Activated naive CD4-positive, alpha-beta T cell treated with anti-CD3 and anti-CD28 coated beads for 36 hours (primary cell): ENCODE measurements at regions of chr6 and their contacts with region 1.

Region 1: DNA sequence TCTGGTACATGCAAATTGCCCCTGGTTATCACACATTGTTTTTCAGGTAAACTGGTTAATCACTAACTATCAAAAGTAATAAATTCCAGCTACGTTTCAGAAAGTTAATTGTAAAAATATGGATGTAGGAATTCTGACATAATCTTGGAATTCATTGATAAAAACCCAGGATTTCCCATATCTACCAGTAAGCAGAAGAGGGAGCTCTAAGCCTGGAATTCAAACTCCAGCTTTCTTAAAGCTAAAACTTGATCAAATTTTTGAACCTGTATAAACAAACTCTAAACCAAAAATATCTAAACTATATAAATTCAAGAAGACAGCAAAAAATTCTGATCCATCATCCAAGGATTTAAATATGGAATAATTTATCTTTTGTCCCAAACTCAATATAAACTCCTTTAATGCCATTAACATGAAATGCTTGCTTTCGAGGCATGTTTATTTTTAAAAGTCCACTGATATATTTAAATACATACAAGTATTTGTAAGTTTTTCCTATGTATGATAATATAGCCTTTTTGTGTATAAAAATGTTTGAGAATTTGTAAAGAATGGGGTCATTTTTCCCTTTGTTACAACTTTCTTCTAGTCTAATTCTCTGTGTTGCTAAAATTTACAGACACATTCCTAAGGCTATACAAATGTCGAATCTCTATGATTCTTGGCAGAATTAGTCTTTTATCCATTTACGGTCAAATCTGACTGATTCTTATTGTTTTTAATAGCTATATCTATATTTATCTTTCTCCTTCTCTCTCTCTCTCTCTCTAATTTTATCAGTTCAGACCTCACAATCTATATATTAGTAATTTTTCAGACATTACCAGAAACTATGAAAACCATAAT is 91.4 kb upstream of the RNF217 start:
- DNase-seq: no peak
- H3K4me3 Mint-ChIP-seq: no peak overlapping the region
- H3K27ac Mint-ChIP-seq: no peak overlapping the region
- H3K4me1 Mint-ChIP-seq: no peaks in the 10 kb centered on the region
- H3K27me3 Mint-ChIP-seq: no peaks in the 10 kb centered on the region

Region 2: DNA sequence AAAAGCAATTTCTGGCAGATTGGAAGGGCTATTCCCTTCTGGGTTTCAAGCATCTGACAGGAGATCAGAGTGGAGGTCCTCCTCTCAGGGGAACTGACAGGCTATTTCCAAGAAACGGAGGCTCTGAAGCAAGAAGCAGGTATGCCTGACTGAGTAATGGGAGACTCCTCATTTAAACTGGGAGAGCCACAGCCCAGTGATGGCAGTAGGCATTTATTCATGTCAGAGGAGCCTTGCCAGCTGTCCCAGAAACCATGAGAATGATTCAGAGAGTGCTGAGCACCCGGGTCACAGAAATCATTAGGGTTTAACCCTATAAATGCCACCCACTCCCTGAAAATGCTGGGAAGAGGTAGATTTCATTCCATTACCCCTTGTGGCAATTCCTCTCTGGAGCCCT is 156.1 kb before region 1 on chr6:
- CTCF ChIA-PET with region 1: no interaction called
- intact Hi-C with region 1: no loop called
- DNase-seq: no peak
- H3K4me3 Mint-ChIP-seq: no peak overlapping the region
- H3K27ac Mint-ChIP-seq: no peak overlapping the region
- H3K4me1 Mint-ChIP-seq: no peaks in the 10 kb centered on the region
- H3K27me3 Mint-ChIP-seq: peaks cover 2% of the 10 kb centered on the region

Region 3: GRCh38 chr6:124917769-124918168 is 46.9 kb after region 1 on chr6:
- CTCF ChIA-PET with region 1: no interaction called
- intact Hi-C with region 1: no loop called
- DNase-seq: no peak
- H3K4me3 Mint-ChIP-seq: no peak overlapping the region
- H3K27ac Mint-ChIP-seq: no peak overlapping the region
- H3K4me1 Mint-ChIP-seq: no peaks in the 10 kb centered on the region
- H3K27me3 Mint-ChIP-seq: peaks cover 13% of the 10 kb centered on the region

Region 4: GRCh38 chr6:125114248-125114858 is 243.5 kb after region 1 on chr6:
- CTCF ChIA-PET with region 1: interaction called, 82 read pairs
- intact Hi-C with region 1: loop called (anchors 1 kb)
- DNase-seq: peak; percentile 76
- H3K4me3 Mint-ChIP-seq: no peak overlapping the region
- H3K27ac Mint-ChIP-seq: no peak overlapping the region
- H3K4me1 Mint-ChIP-seq: no peaks in the 10 kb centered on the region
- H3K27me3 Mint-ChIP-seq: no peaks in the 10 kb centered on the region